H1 (cell line): ENCODE measurements at regions of chr16 and their contacts with region 1.

Region 1: GRCh38 chr16:29700253-29700987 is 21.4 kb downstream of the QPRT start:
- DNase-seq: peak in 1 of 2 experiments; percentile 84
- H3K4me3 ChIP-seq: peak overlapping the region in 1 of 4 experiments; percentile 35; a peak in 1 of 8 replicates
- H3K27ac ChIP-seq: no peak overlapping the region
- H3K4me1 ChIP-seq: peaks cover 0 to 11% (median 5%) of the 10 kb centered on the region in 4 experiments; a peak in 5 of 7 replicates
- H3K27me3 ChIP-seq: no peaks in the 10 kb centered on the region
- CTCF ChIP-seq: peak; percentile 86 to 90 (median 87)
- EP300 ChIP-seq: 0 out of 3 replicates have a peak, but pooled peaks of 1 of the 2 experiments have one; percentile 41
- POLR2A ChIP-seq: no peak
- RAD21 ChIP-seq: peak; percentile 92

Region 2: GRCh38 chr16:29237971-29238370 is 462.4 kb before region 1 on chr16:
- CTCF ChIA-PET with region 1: no interaction called
- POLR2A ChIA-PET with region 1: no interaction called
- DNase-seq: peak in 1 of 2 experiments; percentile 23
- H3K4me3 ChIP-seq: no peak overlapping the region
- H3K27ac ChIP-seq: no peak overlapping the region
- H3K4me1 ChIP-seq: no peaks in the 10 kb centered on the region
- H3K27me3 ChIP-seq: no peaks in the 10 kb centered on the region
- CTCF ChIP-seq: no peak
- EP300 ChIP-seq: no peak
- POLR2A ChIP-seq: no peak
- RAD21 ChIP-seq: no peak

Region 3: DNA sequence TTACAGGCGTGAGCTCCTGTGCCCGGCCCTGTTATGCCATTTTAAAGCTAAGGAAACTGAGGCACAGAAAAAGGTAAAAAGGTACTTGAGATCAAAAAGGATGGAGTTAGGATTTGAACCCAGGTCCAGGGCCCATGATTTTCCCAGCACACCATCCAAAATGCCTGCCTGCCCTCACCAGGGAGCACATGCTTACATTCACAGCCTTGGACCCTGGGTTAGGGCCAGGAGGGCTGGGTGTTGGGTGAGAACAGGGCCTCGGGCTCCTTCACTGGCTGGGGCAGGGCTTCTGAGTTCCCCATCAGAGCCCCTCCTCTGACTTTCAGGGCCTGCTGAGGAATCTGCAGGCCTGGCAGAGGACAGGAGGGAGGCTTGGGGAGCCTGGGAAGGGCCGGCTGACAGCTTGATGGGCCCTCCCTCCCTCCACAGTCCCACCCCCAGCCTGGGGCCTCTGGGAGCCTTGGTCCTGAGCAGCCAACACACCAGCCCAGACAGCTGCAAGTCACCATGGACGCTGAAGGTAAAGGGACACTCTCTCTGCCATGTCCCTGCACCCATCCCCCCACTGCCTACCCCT is 21.6 kb before region 1 on chr16 and contains the start of gene QPRT:
- CTCF ChIA-PET with region 1: interaction called, 33 read pairs
- POLR2A ChIA-PET with region 1: interaction called, 119 read pairs
- DNase-seq: peak; percentile 81 to 84
- H3K4me3 ChIP-seq: peak within 1 kb of the TSS; percentile 38 to 68 (median 58)
- H3K27ac ChIP-seq: peak within 1 kb of the TSS; percentile 91
- H3K4me1 ChIP-seq: peaks cover 2 to 14% (median 9%) of the 10 kb centered on the region in 4 experiments
- H3K27me3 ChIP-seq: no peaks in the 10 kb centered on the region
- CTCF ChIP-seq: peak in 1 of 3 experiments; percentile 9; a peak in 1 of 4 replicates
- EP300 ChIP-seq: peak in 1 of 2 experiments; percentile 57; a peak in 1 of 3 replicates
- POLR2A ChIP-seq: peak; percentile 64 to 66; a peak in 2 of 3 replicates
- RAD21 ChIP-seq: no peak
- total RNA-seq, gene QPRT: 102 and 106 TPM in 2 replicates

Region 4: GRCh38 chr16:29710227-29711219 is 10.1 kb after region 1 on chr16:
- CTCF ChIA-PET with region 1: interaction called, 138 read pairs
- POLR2A ChIA-PET with region 1: interaction called, 490 read pairs
- DNase-seq: no peak
- H3K4me3 ChIP-seq: peak overlapping the region; percentile 65 to 99 (median 74)
- H3K27ac ChIP-seq: peak overlapping the region; percentile 91
- H3K4me1 ChIP-seq: peaks cover 0 to 7% (median 2%) of the 10 kb centered on the region in 4 experiments; a peak in 1 of 7 replicates
- H3K27me3 ChIP-seq: no peaks in the 10 kb centered on the region
- CTCF ChIP-seq: peak in 2 of 3 experiments; percentile 46 to 64; a peak in 3 of 4 replicates
- EP300 ChIP-seq: no peak
- POLR2A ChIP-seq: peak; percentile 5 to 71
- RAD21 ChIP-seq: 0 out of 4 replicates have a peak, but pooled peaks of 1 of the 2 experiments have one; percentile 24

Region 5: DNA sequence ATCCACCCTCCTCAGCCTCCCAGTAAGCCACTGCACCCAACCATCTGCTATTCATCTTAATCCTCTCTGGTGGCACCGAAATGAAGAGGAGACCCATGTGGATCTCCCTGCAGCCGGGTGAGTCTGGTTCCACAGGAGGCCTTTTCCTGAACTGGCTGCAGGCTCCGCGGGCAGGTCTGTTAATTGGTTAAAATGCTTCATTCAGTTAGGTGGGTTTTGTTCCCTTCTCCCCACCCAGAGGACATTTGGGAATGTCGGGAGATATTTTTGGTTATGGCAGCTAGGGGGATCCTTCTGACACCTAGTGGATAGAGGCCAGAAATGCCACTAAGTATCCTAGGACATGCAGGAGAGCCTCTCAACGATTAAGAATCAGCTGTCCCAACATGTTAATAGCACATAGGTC is 28.7 kb after region 1 on chr16:
- CTCF ChIA-PET with region 1: interaction called, 138 read pairs
- POLR2A ChIA-PET with region 1: interaction called, 490 read pairs
- DNase-seq: no peak
- H3K4me3 ChIP-seq: no peak overlapping the region
- H3K27ac ChIP-seq: no peak overlapping the region
- H3K4me1 ChIP-seq: no peaks in the 10 kb centered on the region
- H3K27me3 ChIP-seq: no peaks in the 10 kb centered on the region
- CTCF ChIP-seq: peak in 2 of 3 experiments; percentile 68 to 90; a peak in 3 of 4 replicates
- EP300 ChIP-seq: no peak
- POLR2A ChIP-seq: no peak
- RAD21 ChIP-seq: peak; percentile 54 to 63

Region 6: GRCh38 chr16:29790183-29790952 is 89.9 kb after region 1 on chr16 and contains the start of gene KIF22:
- CTCF ChIA-PET with region 1: interaction called, 17 read pairs
- POLR2A ChIA-PET with region 1: interaction called, 8 read pairs
- DNase-seq: peak; percentile 95 to 99
- H3K4me3 ChIP-seq: peak within 1 kb of the TSS; percentile 92 to 98 (median 96)
- H3K27ac ChIP-seq: peak within 1 kb of the TSS; percentile 67; the same call in 1 of the 2 replicates
- H3K4me1 ChIP-seq: peaks cover 3 to 16% (median 5%) of the 10 kb centered on the region in 4 experiments
- H3K27me3 ChIP-seq: no peaks in the 10 kb centered on the region
- CTCF ChIP-seq: peak; percentile 78 to 84 (median 81)
- EP300 ChIP-seq: peak in 1 of 2 experiments; percentile 79; a peak in 1 of 3 replicates
- POLR2A ChIP-seq: peak; percentile 65 to 88
- RAD21 ChIP-seq: peak; percentile 54 to 67
- total RNA-seq, gene KIF22: 142 and 145 TPM in 2 replicates